ENCODE measurements at regions of chr17 and their contacts with region 1.

Region 1: GRCh38 chr17:17823433-17824118 is 13.2 kb downstream of the SREBF1 start:
- DNase-seq: peak; percentile 89
- ATAC-seq: peak; percentile 86
- H3K4me3 Mint-ChIP-seq: peak overlapping the region; percentile 91
- H3K27ac Mint-ChIP-seq: peak overlapping the region; percentile 94
- H3K4me1 Mint-ChIP-seq: peaks cover 80% of the 10 kb centered on the region
- H3K27me3 Mint-ChIP-seq: no peaks in the 10 kb centered on the region

Region 2: DNA sequence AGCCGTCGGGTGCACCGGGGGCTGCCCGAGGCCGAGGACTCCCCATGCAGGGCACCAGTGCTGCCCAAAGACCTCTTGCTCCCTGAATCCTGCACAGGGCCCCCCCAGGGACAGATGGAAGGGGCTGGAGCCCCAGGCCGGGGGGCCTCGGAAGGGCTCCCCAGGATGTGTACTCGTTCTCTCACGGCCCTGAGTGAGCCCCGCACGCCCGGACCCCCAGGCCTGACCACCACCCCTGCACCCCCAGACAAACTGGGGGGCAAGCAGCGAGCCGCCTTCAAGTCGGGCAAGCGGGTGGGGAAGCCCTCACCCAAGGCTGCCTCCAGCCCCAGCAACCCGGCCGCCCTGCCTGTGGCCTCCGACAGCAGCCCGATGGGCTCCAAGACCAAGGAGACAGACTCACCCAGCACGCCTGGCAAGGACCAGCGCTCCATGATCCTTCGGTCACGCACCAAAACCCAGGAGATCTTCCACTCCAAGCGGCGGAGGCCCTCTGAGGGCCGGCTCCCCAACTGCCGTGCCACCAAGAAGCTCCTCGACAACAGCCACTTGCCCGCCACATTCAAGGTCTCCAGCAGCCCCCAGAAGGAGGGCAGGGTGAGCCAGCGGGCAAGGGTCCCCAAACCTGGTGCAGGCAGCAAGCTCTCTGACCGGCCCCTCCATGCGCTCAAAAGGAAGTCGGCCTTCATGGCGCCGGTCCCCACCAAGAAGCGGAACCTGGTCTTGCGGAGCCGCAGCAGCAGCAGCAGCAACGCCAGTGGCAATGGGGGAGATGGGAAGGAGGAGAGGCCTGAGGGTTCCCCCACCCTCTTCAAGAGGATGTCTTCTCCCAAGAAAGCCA is 27.4 kb before region 1 on chr17:
- POLR2A ChIA-PET with region 1: no interaction called
- DNase-seq: no peak
- ATAC-seq: no peak
- H3K4me3 Mint-ChIP-seq: no peak overlapping the region
- H3K27ac Mint-ChIP-seq: no peak overlapping the region
- H3K4me1 Mint-ChIP-seq: peaks cover 22% of the 10 kb centered on the region
- H3K27me3 Mint-ChIP-seq: no peaks in the 10 kb centered on the region

Region 3: GRCh38 chr17:17812211-17813057 is 11.1 kb before region 1 on chr17:
- POLR2A ChIA-PET with region 1: interaction called, 12 read pairs
- DNase-seq: peak; percentile 81
- ATAC-seq: peak; percentile 17
- H3K4me3 Mint-ChIP-seq: no peak overlapping the region
- H3K27ac Mint-ChIP-seq: peak overlapping the region; percentile 34
- H3K4me1 Mint-ChIP-seq: peaks cover 14% of the 10 kb centered on the region
- H3K27me3 Mint-ChIP-seq: no peaks in the 10 kb centered on the region

Region 4: GRCh38 chr17:17836250-17836817 is 12.8 kb after region 1 on chr17:
- POLR2A ChIA-PET with region 1: interaction called, 260 read pairs
- DNase-seq: peak; percentile 99
- ATAC-seq: peak; percentile 68
- H3K4me3 Mint-ChIP-seq: peak overlapping the region; percentile 92
- H3K27ac Mint-ChIP-seq: peak overlapping the region; percentile 94
- H3K4me1 Mint-ChIP-seq: peaks cover 69% of the 10 kb centered on the region
- H3K27me3 Mint-ChIP-seq: no peaks in the 10 kb centered on the region

Measured in activated naive CD8-positive, alpha-beta T cell treated with anti-CD3 and anti-CD28 coated beads, Interleukin-2, amount 10 ng/mL, durations not matched to agents 7 days and 5 days (primary cell).